Activated T-helper 1 cell treated with anti-CD3 and anti-CD28 coated beads, Interleukin-12 subunit alpha, Interleukin-12 subunit beta, Interleukin-2, Interleukin-4 antibody, amounts not matched to agents 30 ng/mL and 10 ng/mL and 1 ng/mL, durations not matched to agents 14 hours and 24 hours and 36 hours (primary cell): ENCODE measurements at regions of chr11 and their contacts with region 1.

Region 1: GRCh38 chr11:64856382-64857227 is 12.2 kb upstream of the CDC42BPG start:
- DNase-seq: peak; percentile 35
- H3K4me3 Mint-ChIP-seq: peak overlapping the region; percentile 52
- H3K27ac Mint-ChIP-seq: peak overlapping the region; percentile 59
- H3K4me1 Mint-ChIP-seq: peaks cover 78% of the 10 kb centered on the region
- H3K27me3 Mint-ChIP-seq: no peaks in the 10 kb centered on the region

Region 2: DNA sequence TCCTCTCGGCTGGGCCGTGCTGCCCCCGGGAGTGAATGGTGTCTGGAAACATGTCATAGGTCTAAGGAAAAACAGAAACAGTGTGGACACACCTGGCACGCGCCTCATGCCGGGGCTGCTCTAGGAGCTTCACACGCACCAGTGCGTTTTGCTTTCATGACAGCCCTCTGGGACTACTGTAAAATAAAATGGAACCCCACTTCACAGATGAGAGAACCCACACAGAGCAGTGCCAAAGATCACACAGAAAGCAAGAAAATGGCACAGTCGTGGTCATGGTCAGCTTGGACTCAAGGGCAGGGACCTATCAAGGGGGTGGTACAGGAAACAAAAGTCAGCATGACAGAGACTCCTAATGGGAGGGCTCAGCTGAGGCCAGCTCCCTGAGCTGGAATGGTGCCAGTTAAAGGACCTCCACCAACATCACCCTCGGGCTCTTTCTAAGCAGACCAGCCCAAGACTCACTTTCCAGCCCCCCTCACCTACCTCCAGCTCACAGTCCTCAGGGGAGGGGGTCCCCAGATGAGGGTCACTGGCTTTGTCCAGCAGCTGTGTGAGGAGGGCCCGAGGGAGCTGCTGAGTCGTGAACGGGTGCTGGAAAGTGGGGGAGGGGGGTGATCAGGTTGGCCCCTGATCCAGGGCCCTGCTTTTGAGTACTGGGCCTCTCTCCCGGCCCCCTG is 56.8 kb before region 1 on chr11:
- intact Hi-C with region 1: no loop called
- DNase-seq: no peak
- H3K4me3 Mint-ChIP-seq: no peak overlapping the region
- H3K27ac Mint-ChIP-seq: no peak overlapping the region
- H3K4me1 Mint-ChIP-seq: peaks cover 15% of the 10 kb centered on the region
- H3K27me3 Mint-ChIP-seq: no peaks in the 10 kb centered on the region

Region 3: DNA sequence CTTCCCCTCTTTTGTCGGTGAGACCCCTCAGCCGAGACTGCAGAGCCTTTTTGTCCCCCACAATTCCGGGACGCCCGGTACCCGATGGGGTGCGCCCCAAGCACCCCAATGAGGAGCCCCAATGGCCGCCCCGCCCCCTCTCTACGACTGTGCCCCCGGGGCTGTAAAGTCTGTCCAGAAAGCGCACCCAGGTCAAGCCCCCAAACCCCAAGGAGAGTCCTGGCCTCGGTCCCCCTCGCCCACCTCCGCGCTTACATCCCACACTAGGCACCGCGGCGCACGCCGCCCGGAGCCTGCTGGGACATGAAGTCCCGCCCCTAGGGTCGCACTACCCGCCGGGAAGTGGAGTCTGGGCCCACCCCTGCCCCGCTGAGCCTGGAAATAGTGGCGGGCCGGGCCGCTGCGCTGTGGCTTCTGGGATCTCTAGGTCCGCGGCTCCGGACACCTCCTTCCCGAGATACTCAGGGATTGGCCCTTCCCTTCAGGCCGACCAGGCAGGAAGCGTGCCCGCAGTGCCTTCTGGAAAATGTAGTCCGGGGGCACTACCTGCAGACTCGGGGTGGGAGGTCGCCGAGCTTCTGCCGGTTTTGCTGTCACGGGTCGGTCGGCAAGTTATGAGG is 46.2 kb before region 1 on chr11 and contains the start of gene MEN1:
- intact Hi-C with region 1: loop called (anchors 2 kb)
- DNase-seq: peak; percentile 67
- H3K4me3 Mint-ChIP-seq: peak within 1 kb of the TSS; percentile 95
- H3K27ac Mint-ChIP-seq: peak within 1 kb of the TSS; percentile 89
- H3K4me1 Mint-ChIP-seq: peaks cover 22% of the 10 kb centered on the region
- H3K27me3 Mint-ChIP-seq: peaks cover 5% of the 10 kb centered on the region
- total RNA-seq, gene MEN1: 39.6 and 43.8 TPM in 2 replicates